Psoas muscle (tissue), 8 donors: ENCODE measurements at regions of chr6 and their contacts with region 1.

Region 1: DNA sequence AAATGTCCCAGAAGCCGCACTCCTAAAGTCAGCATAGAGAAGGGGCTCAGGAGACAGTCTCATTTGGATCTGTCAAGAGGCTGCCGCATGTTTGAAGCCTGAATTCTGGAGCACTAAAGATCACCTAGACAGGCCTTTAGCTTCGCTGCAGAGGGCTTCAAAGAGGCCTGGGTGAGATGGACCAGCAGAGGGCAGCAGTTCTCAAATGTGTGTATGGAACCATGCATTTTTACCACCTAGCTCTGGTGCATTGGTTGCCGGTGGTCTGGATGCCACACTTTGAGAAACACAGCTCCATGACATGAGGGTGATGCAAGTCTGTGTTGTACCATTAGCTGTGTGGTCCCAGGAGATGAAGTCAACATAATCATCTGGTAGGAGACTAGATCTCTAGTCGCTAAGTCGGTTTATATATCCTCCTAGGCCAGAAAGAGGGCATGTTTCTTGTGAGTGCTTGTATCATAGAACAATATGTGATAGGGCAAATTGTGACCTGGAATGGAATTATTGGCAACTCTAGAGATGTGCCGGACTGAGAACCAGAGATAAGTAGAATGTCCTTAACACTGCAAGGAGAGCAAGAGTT is 64.8 kb downstream of the KIAA0319 start:
- DNase-seq: peak; percentile 63 to 72
- ATAC-seq: peak; percentile 65 to 87 (median 78)
- H3K4me3 ChIP-seq: no peak overlapping the region
- H3K27ac ChIP-seq: no peak overlapping the region
- H3K4me1 ChIP-seq: no peaks in the 10 kb centered on the region
- H3K27me3 ChIP-seq: no peaks in the 10 kb centered on the region
- CTCF ChIP-seq: peak; percentile 69

Region 2: GRCh38 chr6:24673625-24674024 is 92.4 kb after region 1 on chr6:
- intact Hi-C with region 1: no loop called
- DNase-seq: no peak
- ATAC-seq: no peak
- H3K4me3 ChIP-seq: no peak overlapping the region
- H3K27ac ChIP-seq: no peak overlapping the region
- H3K4me1 ChIP-seq: peaks cover under 1% of the 10 kb centered on the region
- H3K27me3 ChIP-seq: no peaks in the 10 kb centered on the region
- CTCF ChIP-seq: no peak

Region 3: GRCh38 chr6:24689964-24690363 is 108.8 kb after region 1 on chr6:
- intact Hi-C with region 1: loop called (anchors 1 to 5 kb)
- DNase-seq: no peak
- ATAC-seq: peak in 1 of 4 donors; percentile 30
- H3K4me3 ChIP-seq: no peak overlapping the region
- H3K27ac ChIP-seq: no peak overlapping the region
- H3K4me1 ChIP-seq: no peaks in the 10 kb centered on the region
- H3K27me3 ChIP-seq: no peaks in the 10 kb centered on the region
- CTCF ChIP-seq: no peak

Region 4: GRCh38 chr6:24766680-24767462 is 185.7 kb after region 1 on chr6:
- intact Hi-C with region 1: loop called (anchors 5 to 10 kb)
- DNase-seq: no peak
- ATAC-seq: no peak
- H3K4me3 ChIP-seq: no peak overlapping the region
- H3K27ac ChIP-seq: no peak overlapping the region
- H3K4me1 ChIP-seq: no peaks in the 10 kb centered on the region
- H3K27me3 ChIP-seq: no peaks in the 10 kb centered on the region
- CTCF ChIP-seq: peak; percentile 42